Activated CD8-positive, alpha-beta T cell treated with anti-CD3 and anti-CD28 coated beads for 36 hours (primary cell): ENCODE measurements at regions of chr12 and their contacts with region 1.

Region 1: GRCh38 chr12:116708826-116709756 is 28.8 kb downstream of the SPRING1 start:
- DNase-seq: peak; percentile 65
- ATAC-seq: peak; percentile 88
- H3K4me3 Mint-ChIP-seq: peak overlapping the region; percentile 40
- H3K27ac Mint-ChIP-seq: no peak overlapping the region
- H3K4me1 Mint-ChIP-seq: peaks cover 9% of the 10 kb centered on the region
- H3K27me3 Mint-ChIP-seq: peaks cover 3% of the 10 kb centered on the region
- CTCF ChIP-seq: peak; percentile 63

Region 2: DNA sequence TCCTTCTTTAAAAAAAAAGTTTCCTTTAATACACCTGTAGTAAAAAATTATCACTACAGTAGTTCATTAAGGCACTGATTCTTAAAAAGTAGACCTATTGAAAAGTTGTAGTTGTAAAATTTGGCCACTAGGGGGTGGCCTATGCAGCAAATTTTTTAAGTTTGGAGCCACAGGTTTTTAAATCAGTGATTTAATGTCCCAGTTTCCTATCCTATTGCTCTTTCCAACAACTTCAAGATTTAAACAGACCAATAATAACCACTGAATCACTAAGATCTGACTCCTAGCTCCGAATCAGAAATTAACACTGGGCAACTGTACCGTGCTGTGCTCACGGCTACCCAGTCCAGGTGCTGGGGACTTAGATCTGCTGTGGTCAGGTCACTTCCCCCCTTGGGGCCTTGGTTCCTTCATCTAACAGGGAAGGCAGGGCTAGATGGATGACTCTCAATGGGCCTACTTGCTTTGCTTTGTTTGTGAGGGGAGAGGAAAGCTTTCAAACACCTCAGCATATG is 710.9 kb before region 1 on chr12:
- CTCF ChIA-PET with region 1: interaction called, 10 read pairs
- POLR2A ChIA-PET with region 1: no interaction called
- intact Hi-C with region 1: no loop called
- DNase-seq: peak; percentile 14
- ATAC-seq: peak; percentile 66
- H3K4me3 Mint-ChIP-seq: no peak overlapping the region
- H3K27ac Mint-ChIP-seq: no peak overlapping the region
- H3K4me1 Mint-ChIP-seq: peaks cover 6% of the 10 kb centered on the region
- H3K27me3 Mint-ChIP-seq: no peaks in the 10 kb centered on the region
- CTCF ChIP-seq: peak; percentile 95